Gastrocnemius medialis (tissue), 4 donors: ENCODE measurements at regions of chr3 and their contacts with region 1.

Region 1: GRCh38 chr3:107429320-107430181 is 52.3 kb downstream of the CCDC54 start:
- DNase-seq: peak; percentile 35 to 53
- ATAC-seq: peak; percentile 73 to 81
- H3K4me3 ChIP-seq: peak overlapping the region; percentile 77 to 89 (median 82)
- H3K27ac ChIP-seq: peak overlapping the region; percentile 23 to 84 (median 58)
- H3K4me1 ChIP-seq: peaks cover 3 to 7% of the 10 kb centered on the region in 2 donors
- H3K27me3 ChIP-seq: no peaks in the 10 kb centered on the region
- CTCF ChIP-seq: peak; percentile 52 to 89 (median 80)
- POLR2A ChIP-seq: no peak

Region 2: GRCh38 chr3:107206141-107206540 is 223.4 kb before region 1 on chr3:
- in situ Hi-C with region 1: no loop called
- intact Hi-C with region 1: loop called (anchors 2 kb)
- DNase-seq: no peak
- ATAC-seq: peak in 1 of 2 donors; percentile 40
- H3K4me3 ChIP-seq: no peak overlapping the region
- H3K27ac ChIP-seq: peak overlapping the region in 2 of 4 donors; percentile 69 to 80
- H3K4me1 ChIP-seq: peaks cover 30 to 35% of the 10 kb centered on the region in 2 donors
- H3K27me3 ChIP-seq: no peaks in the 10 kb centered on the region
- CTCF ChIP-seq: peak in 4 of 5 experiments; percentile 40 to 66 (median 46)
- POLR2A ChIP-seq: no peak

Region 3: GRCh38 chr3:107271787-107272387 is 157.7 kb before region 1 on chr3:
- in situ Hi-C with region 1: loop called in 1 of 4 experiments (anchors 10 kb)
- intact Hi-C with region 1: loop called (anchors 2 kb)
- DNase-seq: no peak
- ATAC-seq: peak; percentile 58 to 65
- H3K4me3 ChIP-seq: no peak overlapping the region
- H3K27ac ChIP-seq: no peak overlapping the region
- H3K4me1 ChIP-seq: no peaks in the 10 kb centered on the region
- H3K27me3 ChIP-seq: no peaks in the 10 kb centered on the region
- CTCF ChIP-seq: peak; percentile 39 to 60 (median 43)
- POLR2A ChIP-seq: no peak

Region 4: GRCh38 chr3:107522510-107523288 is 93.1 kb after region 1 on chr3 and contains the start of gene BBX:
- in situ Hi-C with region 1: no loop called
- intact Hi-C with region 1: loop called (anchors 1 kb)
- DNase-seq: peak; percentile 87 to 96
- ATAC-seq: peak; percentile 89 to 91
- H3K4me3 ChIP-seq: peak within 1 kb of the TSS; percentile 74 to 99 (median 94)
- H3K27ac ChIP-seq: peak within 1 kb of the TSS; percentile 94 to 97 (median 96)
- H3K4me1 ChIP-seq: peaks cover 9 to 19% of the 10 kb centered on the region in 2 donors
- H3K27me3 ChIP-seq: no peaks in the 10 kb centered on the region
- CTCF ChIP-seq: peak in 1 of 5 experiments; percentile 27
- POLR2A ChIP-seq: peak; percentile 65 to 90
- total RNA-seq, gene BBX: 15.2 to 48.3 (median 20.1) TPM

Region 5: GRCh38 chr3:107651782-107652181 is 222.2 kb after region 1 on chr3:
- in situ Hi-C with region 1: no loop called
- intact Hi-C with region 1: loop called (anchors 10 kb)
- DNase-seq: no peak
- ATAC-seq: no peak
- H3K4me3 ChIP-seq: no peak overlapping the region
- H3K27ac ChIP-seq: no peak overlapping the region
- H3K4me1 ChIP-seq: peaks cover 14 to 20% of the 10 kb centered on the region in 2 donors
- H3K27me3 ChIP-seq: no peaks in the 10 kb centered on the region
- CTCF ChIP-seq: no peak
- POLR2A ChIP-seq: no peak